ENCODE measurements at regions of chr3 and their contacts with region 1.

Region 1: GRCh38 chr3:160531311-160531710 is 34.1 kb downstream of the KPNA4 start:
- DNase-seq: no peak
- H3K4me3 ChIP-seq: no peak overlapping the region
- H3K27ac ChIP-seq: no peak overlapping the region
- H3K4me1 ChIP-seq: no peaks in the 10 kb centered on the region
- H3K27me3 ChIP-seq: no peaks in the 10 kb centered on the region
- CTCF ChIP-seq: no peak

Region 2: GRCh38 chr3:160427832-160428424 is 103.4 kb before region 1 on chr3:
- CTCF ChIA-PET with region 1: no interaction called
- POLR2A ChIA-PET with region 1: no interaction called
- intact Hi-C with region 1: loop called (anchors 5 kb)
- DNase-seq: no peak
- H3K4me3 ChIP-seq: no peak overlapping the region
- H3K27ac ChIP-seq: no peak overlapping the region
- H3K4me1 ChIP-seq: no peaks in the 10 kb centered on the region
- H3K27me3 ChIP-seq: no peaks in the 10 kb centered on the region
- CTCF ChIP-seq: no peak

Region 3: DNA sequence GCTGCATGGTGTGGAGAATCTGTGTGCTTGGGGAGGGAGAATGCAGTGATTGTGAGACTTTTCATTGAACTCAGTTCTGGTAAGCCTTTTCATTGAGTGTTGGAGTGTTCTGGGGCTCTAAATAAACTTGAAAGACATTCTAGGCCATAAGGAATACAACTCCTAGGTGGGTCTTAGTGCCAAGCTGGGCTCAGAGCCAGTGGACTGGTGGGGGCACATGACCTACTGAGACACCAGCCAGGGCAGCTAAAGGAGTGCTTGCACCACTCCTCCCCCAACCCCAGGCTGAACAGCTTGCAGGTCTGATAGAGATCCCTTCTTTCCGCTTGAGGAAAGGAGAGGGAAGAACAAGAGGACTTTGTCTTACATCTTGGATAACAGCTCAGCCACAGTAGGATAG is 55.8 kb after region 1 on chr3:
- CTCF ChIA-PET with region 1: no interaction called
- POLR2A ChIA-PET with region 1: no interaction called
- intact Hi-C with region 1: no loop called
- DNase-seq: no peak
- H3K4me3 ChIP-seq: no peak overlapping the region
- H3K27ac ChIP-seq: no peak overlapping the region
- H3K4me1 ChIP-seq: no peaks in the 10 kb centered on the region
- H3K27me3 ChIP-seq: no peaks in the 10 kb centered on the region
- CTCF ChIP-seq: no peak

Region 4: GRCh38 chr3:161239703-161240102 is 708.4 kb after region 1 on chr3:
- CTCF ChIA-PET with region 1: no interaction called
- POLR2A ChIA-PET with region 1: no interaction called
- intact Hi-C with region 1: loop called (anchors 10 kb)
- DNase-seq: no peak
- H3K4me3 ChIP-seq: no peak overlapping the region
- H3K27ac ChIP-seq: no peak overlapping the region
- H3K4me1 ChIP-seq: no peaks in the 10 kb centered on the region
- H3K27me3 ChIP-seq: no peaks in the 10 kb centered on the region
- CTCF ChIP-seq: no peak